Heart right ventricle (tissue), 16 donors: ENCODE measurements at regions of chr9 and their contacts with region 1.

Region 1: DNA sequence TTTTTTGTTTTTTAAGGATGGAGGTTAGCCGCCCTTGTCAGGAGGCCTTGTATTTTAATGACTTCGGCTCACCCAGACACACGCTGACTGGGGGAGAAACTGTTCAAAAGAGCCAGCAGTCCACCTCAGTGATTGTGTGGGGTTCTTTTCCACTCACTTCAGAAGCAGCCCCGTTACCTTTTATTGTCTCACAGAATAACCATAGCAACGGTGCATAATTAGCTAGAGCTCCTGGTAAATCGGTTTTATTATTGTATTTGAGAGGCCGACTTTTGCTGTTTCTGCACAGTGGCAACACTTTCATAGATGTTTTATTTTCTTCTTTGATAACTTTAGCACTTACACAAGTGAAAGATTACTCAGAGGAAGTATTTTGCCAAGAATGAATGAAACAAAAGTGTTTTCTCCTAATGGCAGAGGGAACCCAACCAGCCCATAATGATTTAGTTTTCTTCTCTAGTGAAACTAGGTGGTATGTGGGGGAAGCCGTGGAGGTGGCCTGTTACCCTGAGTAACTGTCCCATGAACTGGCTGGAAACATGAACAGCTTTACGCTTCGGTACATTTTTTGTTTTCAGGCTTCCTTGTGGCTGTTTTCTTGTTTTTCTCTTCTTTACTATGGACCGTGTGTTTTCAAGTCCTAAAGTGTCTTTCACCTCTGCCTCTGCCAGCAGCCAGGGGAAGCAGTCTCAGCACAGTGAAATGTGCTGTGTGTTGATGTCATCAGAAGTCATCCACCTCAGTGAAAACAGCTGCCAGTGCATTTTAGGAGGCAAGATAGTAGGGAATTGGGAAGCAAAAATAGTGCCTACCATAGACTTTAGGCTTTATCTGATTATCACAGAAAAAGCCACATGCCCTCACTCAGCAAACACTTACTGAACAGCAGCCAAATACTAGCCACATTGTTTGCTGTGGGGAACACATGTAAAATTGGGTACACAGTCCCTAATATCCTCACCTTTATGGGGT is 414.7 kb downstream of the KDM4C start:
- DNase-seq: no peak
- ATAC-seq: peak in 6 of 8 donors; percentile 38 to 87 (median 61)
- H3K4me3 ChIP-seq: no peak overlapping the region
- H3K27ac ChIP-seq: peak overlapping the region in 2 of 10 donors; percentile 20 to 40
- H3K4me1 ChIP-seq: peaks cover 0 to 25% (median 0%) of the 10 kb centered on the region in 9 donors
- H3K27me3 ChIP-seq: no peaks in the 10 kb centered on the region
- CTCF ChIP-seq: peak in 1 of 9 donors; percentile 7

Region 2: DNA sequence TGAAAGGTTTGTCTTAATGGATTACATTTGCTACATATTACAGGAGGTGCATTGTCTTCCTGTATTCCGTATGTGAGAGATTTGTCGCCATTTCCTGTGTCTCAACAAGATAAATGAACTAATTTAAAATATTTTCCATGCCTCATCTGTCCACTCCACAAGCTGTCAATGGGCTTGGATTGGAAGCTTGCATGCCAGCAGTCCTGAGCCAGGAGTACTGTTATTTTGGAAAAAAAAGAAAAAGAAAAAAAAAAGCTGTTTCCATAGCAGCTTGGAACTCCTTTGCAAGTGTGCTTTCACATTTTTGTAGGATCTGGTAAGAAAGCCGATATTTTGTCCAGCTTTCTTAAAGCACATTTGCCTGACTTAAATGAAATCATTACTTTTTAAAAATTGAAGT is 83.8 kb before region 1 on chr9:
- intact Hi-C with region 1: loop called in 1 of 10 experiments (anchors 10 kb)
- DNase-seq: no peak
- ATAC-seq: peak in 6 of 8 donors; percentile 58 to 79 (median 68)
- H3K4me3 ChIP-seq: no peak overlapping the region
- H3K27ac ChIP-seq: peak overlapping the region in 2 of 10 donors; percentile 8 to 66
- H3K4me1 ChIP-seq: peaks cover 0 to 17% (median 3%) of the 10 kb centered on the region in 9 donors
- H3K27me3 ChIP-seq: no peaks in the 10 kb centered on the region
- CTCF ChIP-seq: no peak

Region 3: GRCh38 chr9:7234143-7234542 is 61.7 kb after region 1 on chr9:
- intact Hi-C with region 1: no loop called
- DNase-seq: no peak
- ATAC-seq: no peak
- H3K4me3 ChIP-seq: no peak overlapping the region
- H3K27ac ChIP-seq: no peak overlapping the region
- H3K4me1 ChIP-seq: no peaks in the 10 kb centered on the region
- H3K27me3 ChIP-seq: peaks cover 0 to 5% (median 0%) of the 10 kb centered on the region in 7 donors
- CTCF ChIP-seq: peak in 7 of 9 donors; percentile 35 to 57 (median 44)